PC-9 (cell line): ENCODE measurements at regions of chr11 and their contacts with region 1.

Region 1: GRCh38 chr11:121211626-121212025 is 80.9 kb upstream of the SC5D start:
- DNase-seq: no peak
- H3K4me3 ChIP-seq: no peak overlapping the region
- H3K27ac ChIP-seq: no peak overlapping the region
- H3K4me1 ChIP-seq: no peaks in the 10 kb centered on the region
- H3K27me3 ChIP-seq: peaks cover 74% of the 10 kb centered on the region
- CTCF ChIP-seq: no peak

Region 2: GRCh38 chr11:120554766-120555432 is 656.7 kb before region 1 on chr11:
- CTCF ChIA-PET with region 1: no interaction called
- POLR2A ChIA-PET with region 1: no interaction called
- intact Hi-C with region 1: no loop called
- DNase-seq: no peak
- H3K4me3 ChIP-seq: no peak overlapping the region
- H3K27ac ChIP-seq: no peak overlapping the region
- H3K4me1 ChIP-seq: no peaks in the 10 kb centered on the region
- H3K27me3 ChIP-seq: peaks cover 37% of the 10 kb centered on the region
- CTCF ChIP-seq: no peak

Region 3: GRCh38 chr11:121194731-121195596 is 16.7 kb before region 1 on chr11:
- CTCF ChIA-PET with region 1: interaction called, 15 read pairs
- POLR2A ChIA-PET with region 1: no interaction called
- intact Hi-C with region 1: no loop called
- DNase-seq: peak in 1 of 2 experiments; percentile 29
- H3K4me3 ChIP-seq: no peak overlapping the region
- H3K27ac ChIP-seq: no peak overlapping the region
- H3K4me1 ChIP-seq: no peaks in the 10 kb centered on the region
- H3K27me3 ChIP-seq: peaks cover 97% of the 10 kb centered on the region
- CTCF ChIP-seq: peak; percentile 97